Sciatic nerve (tissue), 2 donors: ENCODE measurements at regions of chr14 and their contacts with region 1.

Region 1: GRCh38 chr14:101178184-101179072 is 274.9 kb upstream of the RTL1 start:
- DNase-seq: no peak
- ATAC-seq: no peak

Region 2: GRCh38 chr14:101207897-101208296 is 29.5 kb after region 1 on chr14:
- intact Hi-C with region 1: loop called (anchors 1 kb)
- DNase-seq: no peak
- ATAC-seq: peak; percentile 44